Heart left ventricle (tissue), 16 donors: ENCODE measurements at regions of chr10 and their contacts with region 1.

Region 1: DNA sequence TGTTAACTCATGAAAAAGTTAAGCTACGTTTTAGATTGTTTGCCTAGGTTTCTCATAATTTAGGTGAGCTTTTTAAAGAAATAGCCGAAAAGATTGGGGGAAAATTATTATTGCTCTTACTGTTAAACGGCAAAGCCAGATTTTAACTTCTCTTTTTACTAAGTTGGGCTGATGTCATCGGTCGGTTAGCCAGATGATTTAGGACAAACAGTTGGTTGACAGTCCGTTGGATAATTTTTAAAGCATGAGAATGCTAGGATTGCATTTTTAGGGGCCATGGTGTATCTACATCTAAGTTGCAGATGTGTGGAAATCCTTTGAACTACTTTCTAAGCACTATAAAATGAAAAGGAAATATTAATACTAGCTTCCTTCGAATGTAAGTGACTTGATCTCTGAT is 280.9 kb upstream of the AKR1E2 start:
- DNase-seq: no peak
- ATAC-seq: no peak
- H3K4me3 ChIP-seq: no peak overlapping the region
- H3K27ac ChIP-seq: no peak overlapping the region
- H3K4me1 ChIP-seq: no peaks in the 10 kb centered on the region
- H3K27me3 ChIP-seq: no peaks in the 10 kb centered on the region
- CTCF ChIP-seq: no peak
- POLR2A ChIP-seq: no peak

Region 2: DNA sequence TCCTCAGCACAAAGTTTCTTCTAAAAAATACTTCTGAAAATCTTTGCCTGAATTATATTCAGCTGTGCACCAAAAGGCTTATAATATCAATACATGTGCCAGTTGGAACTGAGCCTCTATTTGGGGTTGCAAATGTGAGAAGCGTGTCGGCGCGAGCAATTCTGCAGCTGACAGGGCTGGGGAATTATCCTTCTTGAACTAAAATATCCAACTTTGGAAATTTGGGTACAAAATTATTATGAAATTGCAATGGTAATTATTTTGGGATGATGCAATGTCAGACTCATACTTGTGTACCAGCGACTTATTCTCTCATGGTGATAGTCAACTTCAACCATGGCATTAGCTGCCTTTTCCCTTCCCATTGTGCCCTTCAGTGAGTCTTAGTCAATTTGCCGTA is 253.1 kb before region 1 on chr10:
- intact Hi-C with region 1: no loop called
- DNase-seq: peak in 1 of 5 donors; percentile 37
- ATAC-seq: peak in 1 of 4 donors; percentile 26
- H3K4me3 ChIP-seq: no peak overlapping the region
- H3K27ac ChIP-seq: no peak overlapping the region
- H3K4me1 ChIP-seq: peaks cover 0 to 7% (median 0%) of the 10 kb centered on the region in 12 donors
- H3K27me3 ChIP-seq: no peaks in the 10 kb centered on the region
- CTCF ChIP-seq: no peak
- POLR2A ChIP-seq: no peak

Region 3: DNA sequence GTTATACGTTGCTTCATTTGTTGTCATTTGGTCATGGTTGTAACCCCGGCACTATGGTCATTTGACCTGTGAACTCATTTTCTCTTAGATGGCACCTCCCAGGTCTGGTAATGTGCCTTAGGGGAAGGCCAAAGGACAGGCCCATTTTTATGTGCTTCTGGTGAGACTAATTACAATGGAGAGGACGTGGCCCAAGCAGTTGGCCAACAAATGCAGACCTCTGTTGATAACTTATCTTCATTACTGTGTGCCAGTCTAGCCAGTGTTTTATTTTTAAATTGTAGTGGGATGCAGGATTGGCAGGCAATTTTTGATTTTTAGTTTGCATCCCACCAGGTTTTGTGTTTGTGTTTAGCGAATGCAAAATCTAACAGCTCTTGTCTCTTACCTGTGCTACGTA is 40.5 kb before region 1 on chr10:
- intact Hi-C with region 1: loop called in 1 of 10 experiments (anchors 2 kb)
- DNase-seq: no peak
- ATAC-seq: peak; percentile 34 to 62 (median 52)
- H3K4me3 ChIP-seq: no peak overlapping the region
- H3K27ac ChIP-seq: peak overlapping the region in 1 of 12 donors; percentile 32
- H3K4me1 ChIP-seq: peaks cover 0 to 8% (median under 1%) of the 10 kb centered on the region in 12 donors
- H3K27me3 ChIP-seq: no peaks in the 10 kb centered on the region
- CTCF ChIP-seq: no peak
- POLR2A ChIP-seq: no peak